Pancreas (tissue), 10 donors: ENCODE measurements at regions of chr9 and their contacts with region 1.

Region 1: GRCh38 chr9:105157130-105157583 is 87.3 kb upstream of the SLC44A1 start:
- DNase-seq: peak in 4 of 6 donors; percentile 23 to 47 (median 40)
- ATAC-seq: peak; percentile 91 to 97 (median 94)
- H3K4me3 ChIP-seq: no peak overlapping the region
- H3K27ac ChIP-seq: no peak overlapping the region
- H3K4me1 ChIP-seq: no peaks in the 10 kb centered on the region
- H3K27me3 ChIP-seq: no peaks in the 10 kb centered on the region
- CTCF ChIP-seq: peak in 3 of 4 donors; percentile 16 to 29 (median 19)

Region 2: GRCh38 chr9:104927912-104928740 is 229.0 kb before region 1 on chr9 and contains the start of gene ABCA1:
- intact Hi-C with region 1: loop called in 1 of 3 experiments (anchors 10 kb)
- DNase-seq: peak; percentile 86 to 96 (median 89)
- ATAC-seq: peak; percentile 84 to 87 (median 86)
- H3K4me3 ChIP-seq: peak within 1 kb of the TSS; percentile 70 to 88 (median 82)
- H3K27ac ChIP-seq: peak within 1 kb of the TSS; percentile 18 to 77 (median 70)
- H3K4me1 ChIP-seq: peaks cover 3 to 8% (median 4%) of the 10 kb centered on the region in 3 donors
- H3K27me3 ChIP-seq: no peaks in the 10 kb centered on the region
- CTCF ChIP-seq: no peak
- total RNA-seq, gene ABCA1: 7.3 to 20.4 (median 10.0) TPM